Endothelial cell of umbilical vein (primary cell): ENCODE measurements at regions of chr9 and their contacts with region 1.

Region 1: DNA sequence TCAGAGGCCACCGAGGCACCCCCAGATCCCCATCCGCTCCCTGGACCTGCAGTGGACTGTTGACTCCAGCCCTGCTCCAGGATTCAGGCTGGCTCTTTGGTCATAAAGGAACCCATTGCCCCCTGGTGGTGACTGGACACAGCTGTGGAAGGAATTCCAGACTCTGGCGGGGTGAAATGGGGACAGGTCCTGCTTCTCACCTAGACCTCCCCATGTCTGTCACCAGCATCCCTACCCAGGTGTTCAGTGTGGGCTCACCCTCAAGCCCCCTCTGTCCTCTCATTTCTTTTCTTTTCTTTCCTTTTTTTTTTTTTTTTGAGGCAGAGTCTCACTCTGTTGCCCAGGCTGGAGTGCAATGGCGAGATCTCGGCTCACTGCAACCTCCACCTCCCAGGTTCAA is 25.5 kb upstream of the STXBP1 start:
- DNase-seq: peak; percentile 70
- H3K4me3 ChIP-seq: no peak overlapping the region
- H3K27ac ChIP-seq: no peak overlapping the region
- H3K4me1 ChIP-seq: no peaks in the 10 kb centered on the region
- H3K27me3 ChIP-seq: no peaks in the 10 kb centered on the region
- CTCF ChIP-seq: peak; percentile 80 to 88
- POLR2A ChIP-seq: no peak

Region 2: GRCh38 chr9:127177236-127177635 is 409.3 kb before region 1 on chr9:
- CTCF ChIA-PET with region 1: no interaction called
- POLR2A ChIA-PET with region 1: no interaction called
- dilution Hi-C with region 1: no loop called
- intact Hi-C with region 1: no loop called
- DNase-seq: no peak
- H3K4me3 ChIP-seq: no peak overlapping the region
- H3K27ac ChIP-seq: no peak overlapping the region
- H3K4me1 ChIP-seq: no peaks in the 10 kb centered on the region
- H3K27me3 ChIP-seq: no peaks in the 10 kb centered on the region
- CTCF ChIP-seq: no peak
- POLR2A ChIP-seq: no peak

Region 3: DNA sequence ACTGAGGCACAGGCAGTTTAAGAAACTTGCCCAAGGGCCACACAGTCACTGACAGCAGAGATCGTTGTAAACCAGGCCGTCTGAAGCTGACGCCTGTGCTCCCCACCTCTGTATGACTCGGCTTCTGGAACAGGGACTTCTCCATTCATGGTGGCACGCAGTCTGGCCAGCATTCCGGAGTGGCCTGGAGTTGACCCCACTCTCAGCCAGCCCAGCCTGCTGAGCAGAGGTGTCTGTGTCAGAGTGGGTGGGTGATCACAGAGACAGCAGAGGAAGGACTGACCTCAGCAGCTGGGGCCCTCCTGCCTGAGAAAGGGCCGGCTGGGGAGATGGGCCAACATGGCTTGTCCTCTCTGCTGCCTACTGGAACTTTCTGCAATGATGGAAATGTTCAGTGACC is 122.6 kb before region 1 on chr9:
- CTCF ChIA-PET with region 1: no interaction called
- POLR2A ChIA-PET with region 1: no interaction called
- dilution Hi-C with region 1: no loop called
- intact Hi-C with region 1: no loop called
- DNase-seq: no peak
- H3K4me3 ChIP-seq: no peak overlapping the region
- H3K27ac ChIP-seq: no peak overlapping the region
- H3K4me1 ChIP-seq: no peaks in the 10 kb centered on the region
- H3K27me3 ChIP-seq: no peaks in the 10 kb centered on the region
- CTCF ChIP-seq: no peak
- POLR2A ChIP-seq: no peak

Region 4: DNA sequence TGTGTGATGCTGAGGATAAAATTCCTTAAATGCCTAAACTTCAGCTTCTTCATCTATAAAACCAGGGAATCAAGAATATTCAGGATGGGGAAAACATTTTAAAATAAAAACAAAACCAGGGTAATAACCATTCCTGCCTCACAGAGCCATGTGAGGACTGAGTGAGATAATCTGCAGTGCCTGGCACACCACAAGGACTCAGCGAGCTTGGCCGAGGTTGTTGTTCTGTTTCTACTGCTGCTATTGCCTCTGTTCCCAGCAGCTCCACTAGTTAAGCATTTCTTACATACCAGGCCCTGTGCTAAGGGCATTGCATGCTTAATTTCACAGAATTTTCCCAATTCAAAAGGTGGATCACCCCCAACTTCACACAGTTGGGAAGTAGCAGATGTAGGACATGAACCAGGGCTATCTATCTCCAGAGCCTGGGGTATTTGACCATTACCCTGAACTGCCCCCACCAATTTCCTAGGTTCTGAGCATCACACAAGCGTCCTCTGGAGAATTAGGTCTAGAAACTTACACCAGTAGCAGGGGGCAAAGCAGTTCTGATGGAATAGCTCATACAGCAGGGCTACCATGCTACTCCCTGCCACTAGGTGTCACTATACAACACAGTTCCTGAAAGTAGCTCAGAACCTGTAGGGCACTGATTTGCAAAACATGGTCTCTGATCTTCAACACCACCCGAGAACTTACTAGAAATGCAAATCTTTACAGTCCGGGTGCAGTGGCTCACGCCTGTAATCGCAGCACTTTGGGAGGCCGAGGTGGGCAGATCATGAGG is 60.9 kb before region 1 on chr9:
- CTCF ChIA-PET with region 1: interaction called, 53 read pairs
- POLR2A ChIA-PET with region 1: interaction called, 6 read pairs
- dilution Hi-C with region 1: no loop called
- intact Hi-C with region 1: no loop called
- DNase-seq: no peak
- H3K4me3 ChIP-seq: no peak overlapping the region
- H3K27ac ChIP-seq: no peak overlapping the region
- H3K4me1 ChIP-seq: peaks cover 51% of the 10 kb centered on the region
- H3K27me3 ChIP-seq: no peaks in the 10 kb centered on the region
- CTCF ChIP-seq: peak; percentile 53 to 55
- POLR2A ChIP-seq: no peak

Region 5: DNA sequence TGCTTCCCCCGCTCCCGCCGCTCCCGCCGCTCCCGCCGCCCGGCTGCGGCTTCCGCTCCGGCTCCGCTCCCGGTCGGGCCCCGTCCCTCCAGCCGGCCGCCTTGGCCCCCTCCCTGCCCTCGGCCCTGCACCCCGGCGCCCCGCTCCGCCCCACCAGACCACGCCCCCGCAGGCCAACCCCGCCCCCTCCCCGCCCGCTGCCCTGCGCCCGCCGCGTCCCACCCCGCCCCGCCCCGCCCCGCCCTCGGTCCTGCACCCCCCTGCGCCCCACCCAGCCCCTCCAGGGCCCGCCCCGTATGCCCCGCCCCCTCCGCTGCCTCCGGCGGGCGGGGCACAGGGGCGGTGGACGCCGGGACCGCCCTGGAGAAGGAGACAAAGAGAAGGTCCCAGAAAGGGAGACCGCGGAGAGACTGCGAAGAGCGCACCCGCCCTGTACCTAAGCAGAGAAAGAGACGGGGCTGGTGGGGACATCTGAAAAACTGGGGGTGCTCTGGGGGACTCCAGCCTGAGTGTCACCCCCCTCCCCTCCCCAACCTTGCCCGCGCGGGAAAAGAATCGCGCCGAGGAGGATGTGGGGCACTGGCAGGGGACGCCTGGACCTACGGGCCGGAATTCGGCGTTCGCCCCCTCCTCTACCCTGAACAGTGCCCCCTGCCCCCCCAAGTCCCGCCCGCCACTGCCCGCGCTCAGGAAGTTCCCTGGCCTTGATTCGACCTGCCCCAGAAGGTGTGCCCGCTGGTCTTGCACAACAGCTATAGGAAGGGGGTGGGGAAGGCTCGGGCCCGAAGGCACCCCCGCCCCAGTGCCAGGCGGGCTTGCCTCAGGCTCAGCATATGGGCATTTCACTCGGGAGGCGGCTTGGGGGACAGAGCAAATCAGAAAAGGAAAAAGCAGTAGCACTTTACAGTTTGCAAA is 17.3 kb before region 1 on chr9:
- CTCF ChIA-PET with region 1: interaction called, 6 read pairs
- POLR2A ChIA-PET with region 1: no interaction called
- dilution Hi-C with region 1: no loop called
- intact Hi-C with region 1: loop called (anchors 2 kb)
- DNase-seq: peak; percentile 63
- H3K4me3 ChIP-seq: peak overlapping the region; percentile 77 to 96 (median 79)
- H3K27ac ChIP-seq: peak overlapping the region; percentile 80
- H3K4me1 ChIP-seq: peaks cover 35% of the 10 kb centered on the region
- H3K27me3 ChIP-seq: no peaks in the 10 kb centered on the region
- CTCF ChIP-seq: no peak
- POLR2A ChIP-seq: peak; percentile 67

Region 6: GRCh38 chr9:127676636-127677035 is 90.1 kb after region 1 on chr9:
- CTCF ChIA-PET with region 1: no interaction called
- POLR2A ChIA-PET with region 1: no interaction called
- dilution Hi-C with region 1: no loop called
- intact Hi-C with region 1: no loop called
- DNase-seq: no peak
- H3K4me3 ChIP-seq: no peak overlapping the region
- H3K27ac ChIP-seq: no peak overlapping the region
- H3K4me1 ChIP-seq: no peaks in the 10 kb centered on the region
- H3K27me3 ChIP-seq: no peaks in the 10 kb centered on the region
- CTCF ChIP-seq: no peak
- POLR2A ChIP-seq: no peak

Region 7: DNA sequence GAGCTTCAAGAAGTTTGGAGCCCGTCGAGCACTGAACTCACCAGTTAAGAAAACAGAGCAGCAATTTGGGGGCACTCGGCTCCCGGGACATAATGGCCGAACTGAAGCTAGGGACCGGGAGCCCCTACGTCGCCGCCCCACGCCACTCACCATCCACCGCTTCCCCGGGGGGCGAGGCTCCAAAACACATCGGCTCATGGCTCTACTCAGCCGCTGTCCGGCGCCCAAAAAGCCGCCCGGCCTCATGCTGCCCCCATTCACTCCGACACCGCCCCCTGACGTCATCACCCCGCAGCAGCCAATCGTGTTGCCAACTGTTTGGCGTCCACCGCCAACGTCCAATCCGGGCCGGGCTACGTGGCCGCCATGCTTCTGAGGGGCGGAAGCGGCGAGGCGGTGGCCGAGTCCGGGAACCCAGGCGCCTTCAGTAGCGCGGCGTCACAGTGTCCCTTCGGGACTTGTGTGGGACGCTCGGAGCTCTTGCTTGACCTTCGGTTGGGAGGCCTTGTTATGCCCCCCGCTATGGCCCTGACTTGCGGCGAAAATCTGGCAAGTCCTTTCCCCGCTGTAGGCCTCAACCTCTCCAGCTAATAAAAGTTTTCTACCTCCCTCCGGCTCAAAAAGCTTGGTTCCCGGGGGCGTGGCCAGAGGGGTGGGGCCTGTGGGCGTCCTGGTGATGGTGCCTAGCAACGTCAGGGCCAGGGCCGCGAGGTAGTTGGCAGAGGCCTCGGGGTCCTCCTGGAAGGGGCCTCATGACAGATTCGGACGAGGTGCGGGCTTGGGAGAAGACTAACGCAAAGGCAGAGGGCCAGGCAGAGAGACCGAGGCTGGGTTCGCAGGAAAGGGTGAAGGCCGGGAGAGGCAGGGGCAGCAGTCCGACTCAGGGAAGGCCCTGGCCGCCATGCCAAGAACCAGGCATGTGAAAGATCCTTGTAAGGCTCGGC is 129.1 kb after region 1 on chr9 and contains the starts of genes PTRH1 and TTC16:
- CTCF ChIA-PET with region 1: interaction called, 3 read pairs
- POLR2A ChIA-PET with region 1: no interaction called
- dilution Hi-C with region 1: no loop called
- intact Hi-C with region 1: loop called (anchors 1 kb)
- DNase-seq: peak; percentile 95
- H3K4me3 ChIP-seq: peak within 1 kb of the TSS; percentile 67 to 88 (median 85)
- H3K27ac ChIP-seq: peak within 1 kb of the TSS; percentile 36
- H3K4me1 ChIP-seq: peaks cover 5% of the 10 kb centered on the region
- H3K27me3 ChIP-seq: no peaks in the 10 kb centered on the region
- CTCF ChIP-seq: no peak
- POLR2A ChIP-seq: no peak
- total RNA-seq, gene PTRH1: 19.6 and 25.1 TPM in 2 replicates
- total RNA-seq, gene TTC16: not detected in 2 replicates

Region 8: GRCh38 chr9:127802576-127803443 is 216.3 kb after region 1 on chr9 and contains the start of gene FPGS:
- CTCF ChIA-PET with region 1: no interaction called
- POLR2A ChIA-PET with region 1: no interaction called
- dilution Hi-C with region 1: no loop called
- intact Hi-C with region 1: loop called (anchors 5 kb)
- DNase-seq: peak; percentile 86
- H3K4me3 ChIP-seq: peak within 1 kb of the TSS; percentile 71 to 80 (median 79)
- H3K27ac ChIP-seq: peak within 1 kb of the TSS; percentile 83
- H3K4me1 ChIP-seq: peaks cover 19% of the 10 kb centered on the region
- H3K27me3 ChIP-seq: no peaks in the 10 kb centered on the region
- CTCF ChIP-seq: peak in 1 of 2 donors; percentile 1
- POLR2A ChIP-seq: peak; percentile 69
- total RNA-seq, gene FPGS: 90.2 and 90.7 TPM in 2 replicates